Colonic mucosa (tissue), 4 donors: ENCODE measurements at regions of chr3 and their contacts with region 1.

Region 1: GRCh38 chr3:61858056-61858455 is 296.7 kb downstream of the PTPRG start:
- DNase-seq: no peak
- H3K4me3 ChIP-seq: no peak overlapping the region
- H3K27ac ChIP-seq: no peak overlapping the region
- H3K4me1 ChIP-seq: no peaks in the 10 kb centered on the region
- H3K27me3 ChIP-seq: no peaks in the 10 kb centered on the region
- CTCF ChIP-seq: peak; percentile 34

Region 2: GRCh38 chr3:62051507-62051906 is 193.5 kb after region 1 on chr3:
- intact Hi-C with region 1: loop called (anchors 5 kb)
- DNase-seq: peak; percentile 40
- H3K4me3 ChIP-seq: no peak overlapping the region
- H3K27ac ChIP-seq: no peak overlapping the region
- H3K4me1 ChIP-seq: no peaks in the 10 kb centered on the region
- H3K27me3 ChIP-seq: no peaks in the 10 kb centered on the region
- CTCF ChIP-seq: peak; percentile 21

Region 3: GRCh38 chr3:62188681-62189383 is 330.8 kb after region 1 on chr3:
- intact Hi-C with region 1: loop called (anchors 2 kb)
- DNase-seq: peak; percentile 65
- H3K4me3 ChIP-seq: no peak overlapping the region
- H3K27ac ChIP-seq: no peak overlapping the region
- H3K4me1 ChIP-seq: no peaks in the 10 kb centered on the region
- H3K27me3 ChIP-seq: no peaks in the 10 kb centered on the region
- CTCF ChIP-seq: peak; percentile 66

Region 4: DNA sequence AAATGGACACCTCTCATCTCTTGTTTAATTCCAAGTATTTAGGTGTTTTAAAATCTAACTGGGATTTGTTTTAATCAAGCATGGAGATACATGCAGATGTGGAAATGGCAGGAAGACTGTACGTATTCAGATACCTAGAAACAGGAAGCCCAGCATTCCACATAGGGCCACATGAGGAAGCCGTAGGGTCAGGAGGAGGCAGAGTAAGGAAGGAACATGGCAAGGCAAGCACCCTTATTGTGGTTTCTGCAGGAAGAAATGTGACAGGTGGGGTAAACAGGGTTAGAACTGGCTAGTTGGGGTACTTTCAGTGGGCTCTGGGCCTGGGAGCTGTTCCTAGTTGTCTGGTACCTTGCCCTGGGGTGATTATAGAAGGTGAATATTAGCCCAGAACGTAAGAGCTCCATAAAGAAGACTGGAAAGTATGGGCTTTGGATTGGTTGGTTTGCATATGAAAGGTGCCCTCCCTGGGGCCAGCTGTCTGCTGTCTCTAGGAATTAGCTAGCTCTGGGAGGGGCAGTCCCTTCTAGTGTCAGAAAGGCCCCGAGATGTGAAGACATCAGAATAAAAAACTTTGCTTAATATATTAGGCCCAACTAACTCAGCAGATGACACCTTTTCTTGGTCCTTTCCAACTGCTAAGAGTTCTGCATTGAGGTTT is 1124.9 kb after region 1 on chr3:
- intact Hi-C with region 1: no loop called
- DNase-seq: no peak
- H3K4me3 ChIP-seq: no peak overlapping the region
- H3K27ac ChIP-seq: no peak overlapping the region
- H3K4me1 ChIP-seq: no peaks in the 10 kb centered on the region
- H3K27me3 ChIP-seq: no peaks in the 10 kb centered on the region
- CTCF ChIP-seq: no peak